ENCODE measurements at regions of chr7 and their contacts with region 1.

Region 1: DNA sequence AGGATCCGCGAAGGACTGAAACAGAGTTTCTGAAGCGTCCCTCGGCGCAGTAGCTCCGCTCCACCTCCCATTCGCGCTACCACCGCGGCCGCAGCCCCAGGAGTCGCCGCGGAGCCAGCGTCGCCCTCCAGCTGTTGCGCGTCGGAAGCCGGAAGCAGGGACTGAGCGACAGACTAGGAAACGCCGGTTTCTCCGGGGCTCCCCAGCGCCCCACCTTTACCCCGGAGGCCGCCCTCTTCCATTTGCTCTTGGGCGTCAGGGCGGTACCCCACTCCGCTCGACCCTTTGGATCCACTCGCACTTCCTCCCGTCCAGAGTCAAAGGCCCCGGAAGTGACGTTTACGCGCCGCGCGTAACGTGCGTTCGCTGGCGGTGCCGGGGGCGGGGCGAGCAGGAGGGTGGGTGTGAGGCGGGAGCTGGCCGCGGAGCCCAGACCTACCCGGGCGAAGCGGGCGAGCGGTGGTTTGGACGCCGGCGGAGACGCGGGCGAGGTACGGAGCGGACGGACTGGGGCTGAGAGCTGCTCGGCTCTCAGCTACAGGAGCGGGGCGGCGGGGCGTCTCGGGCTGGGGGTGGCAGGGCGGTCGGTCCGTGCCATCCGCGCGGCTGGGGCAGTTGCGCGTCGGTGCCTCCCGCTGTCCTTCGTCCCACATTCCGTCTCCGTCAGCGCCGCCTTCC is at the start of gene RABGEF1:
- DNase-seq: peak; percentile 99 to 100
- ATAC-seq: peak; percentile 99
- H3K4me3 ChIP-seq: peak within 1 kb of the TSS; percentile 49 to 73
- H3K27ac ChIP-seq: peak within 1 kb of the TSS; percentile 25 to 83
- H3K4me1 ChIP-seq: no peaks in the 10 kb centered on the region
- H3K27me3 ChIP-seq: no peaks in the 10 kb centered on the region
- total RNA-seq, gene RABGEF1: 30.3 to 38.0 TPM

Region 2: GRCh38 chr7:66681491-66682349 is 58.7 kb before region 1 on chr7:
- intact Hi-C with region 1: loop called (anchors 2 to 5 kb)
- DNase-seq: peak; percentile 98 to 100
- ATAC-seq: peak; percentile 99
- H3K4me3 ChIP-seq: peak overlapping the region; percentile 70 to 98
- H3K27ac ChIP-seq: peak overlapping the region; percentile 6 to 93
- H3K4me1 ChIP-seq: no peaks in the 10 kb centered on the region
- H3K27me3 ChIP-seq: no peaks in the 10 kb centered on the region

Region 3: DNA sequence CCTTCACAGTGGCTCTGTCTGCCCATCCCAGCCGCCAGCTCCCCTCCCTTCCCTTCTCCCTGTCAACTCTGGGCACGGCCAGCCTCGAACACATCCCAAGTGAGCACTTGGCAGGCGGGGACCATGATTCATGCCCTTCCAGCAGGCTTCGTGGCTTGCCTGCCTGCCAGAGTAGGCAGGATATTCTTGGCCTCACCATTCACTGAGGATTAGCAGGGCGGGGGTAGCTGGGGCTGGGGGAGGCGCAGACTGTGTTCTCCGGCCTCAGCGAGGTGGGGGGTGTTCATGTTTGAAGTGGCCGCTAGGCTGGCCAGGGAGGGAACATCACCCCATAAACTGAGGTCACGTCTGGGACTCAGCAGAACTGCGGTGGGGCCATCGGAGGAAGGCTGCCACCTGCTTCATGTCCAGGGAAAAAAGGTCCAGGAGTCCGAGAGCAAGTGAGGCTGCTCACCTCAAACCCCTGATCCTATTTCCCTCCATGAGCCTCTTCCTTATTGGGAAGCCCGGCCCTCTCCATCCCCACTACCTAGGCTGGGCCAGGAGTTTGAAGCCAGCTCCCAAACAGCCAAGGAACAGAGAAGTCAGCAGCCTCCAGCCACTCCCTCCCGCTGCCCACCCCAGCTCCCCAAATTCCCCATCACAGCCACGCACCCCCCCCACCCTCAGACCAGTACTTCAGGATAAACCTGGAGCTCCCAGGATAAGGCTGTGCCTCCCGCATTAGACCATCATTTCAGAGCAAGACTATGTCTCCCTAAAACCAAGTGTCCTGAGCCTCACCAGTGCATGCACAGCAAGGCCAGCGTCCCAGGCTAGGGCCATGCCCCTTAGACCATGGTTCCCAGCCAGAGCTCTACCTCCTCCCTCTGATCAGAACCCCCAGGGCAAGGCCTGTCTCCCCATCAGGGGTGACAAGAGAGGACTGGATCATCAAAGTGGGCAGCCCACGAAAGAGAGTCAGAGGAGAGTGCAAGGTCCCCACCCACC is 42.7 kb before region 1 on chr7:
- intact Hi-C with region 1: loop called in 1 of 2 experiments (anchors 5 kb)
- DNase-seq: peak; percentile 86 to 91
- ATAC-seq: peak; percentile 73
- H3K4me3 ChIP-seq: no peak overlapping the region
- H3K27ac ChIP-seq: peak overlapping the region in 1 of 2 donors; percentile 8
- H3K4me1 ChIP-seq: no peaks in the 10 kb centered on the region
- H3K27me3 ChIP-seq: no peaks in the 10 kb centered on the region

Region 4: GRCh38 chr7:66804001-66804400 is 63.6 kb after region 1 on chr7:
- intact Hi-C with region 1: no loop called
- DNase-seq: no peak
- ATAC-seq: no peak
- H3K4me3 ChIP-seq: no peak overlapping the region
- H3K27ac ChIP-seq: no peak overlapping the region
- H3K4me1 ChIP-seq: no peaks in the 10 kb centered on the region
- H3K27me3 ChIP-seq: no peaks in the 10 kb centered on the region

Region 5: DNA sequence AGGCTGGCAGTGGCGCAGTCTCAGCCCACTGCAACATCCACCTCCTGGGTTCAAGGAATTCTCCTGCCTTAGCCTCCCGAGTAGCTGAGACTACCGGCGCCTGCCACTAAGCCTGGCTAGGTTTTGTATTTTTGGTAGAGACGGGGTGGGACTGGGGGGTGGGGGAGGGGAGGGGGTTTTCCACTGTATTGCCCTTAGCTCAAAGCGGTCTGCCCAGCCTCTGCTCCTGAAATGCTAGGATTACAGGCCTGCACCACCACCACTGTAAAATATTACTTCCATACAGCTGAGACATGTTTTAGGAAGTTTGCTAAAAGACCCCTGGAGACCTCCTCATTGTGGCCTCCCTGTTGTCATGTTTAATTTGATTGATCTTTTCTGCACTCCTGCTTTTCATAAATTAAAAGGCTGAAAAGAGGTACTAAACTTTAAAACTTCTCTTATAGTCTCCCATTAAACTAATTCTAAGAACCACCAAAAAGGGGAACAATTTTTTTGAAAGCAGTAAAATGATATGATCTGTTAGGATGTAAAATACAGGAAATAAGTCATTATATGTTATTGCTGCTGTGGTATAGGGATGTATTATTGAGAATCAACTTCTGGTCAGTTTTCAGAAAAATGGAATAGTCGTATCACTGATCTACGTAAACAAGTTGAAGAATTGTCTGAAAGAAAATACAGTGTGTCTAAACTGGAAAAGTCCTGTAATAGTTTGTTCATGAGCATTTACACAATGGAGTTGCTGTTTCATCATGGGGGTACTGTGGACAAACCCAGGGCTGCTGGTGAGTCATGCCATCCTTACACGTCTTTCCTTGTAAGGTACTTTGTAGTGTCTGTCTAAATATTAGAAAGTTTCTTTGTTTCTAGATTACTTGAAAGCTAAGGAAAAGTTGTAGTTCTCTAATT is 107.7 kb after region 1 on chr7:
- intact Hi-C with region 1: no loop called
- DNase-seq: no peak
- ATAC-seq: no peak
- H3K4me3 ChIP-seq: no peak overlapping the region
- H3K27ac ChIP-seq: no peak overlapping the region
- H3K4me1 ChIP-seq: no peaks in the 10 kb centered on the region
- H3K27me3 ChIP-seq: no peaks in the 10 kb centered on the region

Measured in aorta (tissue), 5 donors.